ENCODE measurements at regions of chr4 and their contacts with region 1.

Region 1: GRCh38 chr4:147866532-147867271 is 134.8 kb downstream of the ARHGAP10 start:
- DNase-seq: peak; percentile 94
- H3K4me3 Mint-ChIP-seq: no peak overlapping the region
- H3K27ac Mint-ChIP-seq: no peak overlapping the region
- H3K4me1 Mint-ChIP-seq: peaks cover 7% of the 10 kb centered on the region
- H3K27me3 Mint-ChIP-seq: no peaks in the 10 kb centered on the region

Region 2: GRCh38 chr4:147160908-147161513 is 705.7 kb before region 1 on chr4:
- CTCF ChIA-PET with region 1: interaction called, 4 read pairs
- POLR2A ChIA-PET with region 1: no interaction called
- intact Hi-C with region 1: loop called (anchors 5 kb)
- DNase-seq: peak; percentile 11
- H3K4me3 Mint-ChIP-seq: no peak overlapping the region
- H3K27ac Mint-ChIP-seq: no peak overlapping the region
- H3K4me1 Mint-ChIP-seq: peaks cover 2% of the 10 kb centered on the region
- H3K27me3 Mint-ChIP-seq: peaks cover 15% of the 10 kb centered on the region

Region 3: DNA sequence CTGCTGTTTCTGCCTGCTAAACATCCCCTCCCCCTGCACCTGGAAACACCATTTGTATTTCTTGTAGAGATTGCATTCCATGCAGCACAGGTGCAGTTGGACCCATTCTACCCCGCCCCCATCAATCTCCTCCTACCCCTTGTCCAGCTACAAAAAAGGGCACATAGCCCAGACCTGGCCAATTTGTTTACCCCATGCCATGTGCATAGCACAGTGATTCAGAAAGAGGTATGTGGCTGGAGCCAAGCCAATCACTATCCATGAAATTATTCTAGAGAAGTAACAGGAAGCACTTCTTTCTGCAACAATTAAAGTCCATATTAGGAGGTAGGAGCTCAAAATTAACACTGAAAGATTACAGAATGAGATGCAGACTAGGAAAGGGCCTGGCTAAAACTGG is 269.7 kb before region 1 on chr4:
- CTCF ChIA-PET with region 1: interaction called, 34 read pairs
- POLR2A ChIA-PET with region 1: no interaction called
- intact Hi-C with region 1: loop called (anchors 1 kb)
- DNase-seq: no peak
- H3K4me3 Mint-ChIP-seq: no peak overlapping the region
- H3K27ac Mint-ChIP-seq: no peak overlapping the region
- H3K4me1 Mint-ChIP-seq: peaks cover 2% of the 10 kb centered on the region
- H3K27me3 Mint-ChIP-seq: no peaks in the 10 kb centered on the region

Region 4: GRCh38 chr4:147683717-147684700 is 182.7 kb before region 1 on chr4 and contains the start of gene PRMT9:
- CTCF ChIA-PET with region 1: interaction called, 60 read pairs
- POLR2A ChIA-PET with region 1: no interaction called
- intact Hi-C with region 1: loop called (anchors 1 kb)
- DNase-seq: peak; percentile 93
- H3K4me3 Mint-ChIP-seq: peak within 1 kb of the TSS; percentile 85
- H3K27ac Mint-ChIP-seq: peak within 1 kb of the TSS; percentile 88
- H3K4me1 Mint-ChIP-seq: peaks cover 24% of the 10 kb centered on the region
- H3K27me3 Mint-ChIP-seq: no peaks in the 10 kb centered on the region
- total RNA-seq, gene PRMT9: 7.9 to 8.3 TPM

Region 5: GRCh38 chr4:147725673-147726072 is 141.0 kb before region 1 on chr4:
- CTCF ChIA-PET with region 1: interaction called, 15 read pairs
- POLR2A ChIA-PET with region 1: no interaction called
- intact Hi-C with region 1: no loop called
- DNase-seq: no peak
- H3K4me3 Mint-ChIP-seq: no peak overlapping the region
- H3K27ac Mint-ChIP-seq: no peak overlapping the region
- H3K4me1 Mint-ChIP-seq: peaks cover 3% of the 10 kb centered on the region
- H3K27me3 Mint-ChIP-seq: no peaks in the 10 kb centered on the region

Region 6: GRCh38 chr4:147837435-147837834 is 29.3 kb before region 1 on chr4:
- CTCF ChIA-PET with region 1: interaction called, 55 read pairs
- POLR2A ChIA-PET with region 1: no interaction called
- intact Hi-C with region 1: no loop called
- DNase-seq: no peak
- H3K4me3 Mint-ChIP-seq: no peak overlapping the region
- H3K27ac Mint-ChIP-seq: no peak overlapping the region
- H3K4me1 Mint-ChIP-seq: peaks cover 22% of the 10 kb centered on the region
- H3K27me3 Mint-ChIP-seq: no peaks in the 10 kb centered on the region

Region 7: GRCh38 chr4:147910315-147910714 is 43.6 kb after region 1 on chr4:
- CTCF ChIA-PET with region 1: interaction called, 11 read pairs
- POLR2A ChIA-PET with region 1: no interaction called
- intact Hi-C with region 1: no loop called
- DNase-seq: no peak
- H3K4me3 Mint-ChIP-seq: no peak overlapping the region
- H3K27ac Mint-ChIP-seq: no peak overlapping the region
- H3K4me1 Mint-ChIP-seq: no peaks in the 10 kb centered on the region
- H3K27me3 Mint-ChIP-seq: no peaks in the 10 kb centered on the region

Measured in activated CD4-positive, alpha-beta memory T cell treated with anti-CD3 and anti-CD28 coated beads for 36 hours (primary cell).